Prostate gland (tissue), 2 donors: ENCODE measurements at regions of chrX and their contacts with region 1.

Region 1: GRCh38 chrX:11629593-11630211 is 36.0 kb downstream of the ARHGAP6 start:
- DNase-seq: no peak
- H3K4me3 ChIP-seq: no peak overlapping the region
- H3K27ac ChIP-seq: no peak overlapping the region
- H3K4me1 ChIP-seq: no peaks in the 10 kb centered on the region
- H3K27me3 ChIP-seq: no peaks in the 10 kb centered on the region
- CTCF ChIP-seq: no peak
- POLR2A ChIP-seq: no peak

Region 2: DNA sequence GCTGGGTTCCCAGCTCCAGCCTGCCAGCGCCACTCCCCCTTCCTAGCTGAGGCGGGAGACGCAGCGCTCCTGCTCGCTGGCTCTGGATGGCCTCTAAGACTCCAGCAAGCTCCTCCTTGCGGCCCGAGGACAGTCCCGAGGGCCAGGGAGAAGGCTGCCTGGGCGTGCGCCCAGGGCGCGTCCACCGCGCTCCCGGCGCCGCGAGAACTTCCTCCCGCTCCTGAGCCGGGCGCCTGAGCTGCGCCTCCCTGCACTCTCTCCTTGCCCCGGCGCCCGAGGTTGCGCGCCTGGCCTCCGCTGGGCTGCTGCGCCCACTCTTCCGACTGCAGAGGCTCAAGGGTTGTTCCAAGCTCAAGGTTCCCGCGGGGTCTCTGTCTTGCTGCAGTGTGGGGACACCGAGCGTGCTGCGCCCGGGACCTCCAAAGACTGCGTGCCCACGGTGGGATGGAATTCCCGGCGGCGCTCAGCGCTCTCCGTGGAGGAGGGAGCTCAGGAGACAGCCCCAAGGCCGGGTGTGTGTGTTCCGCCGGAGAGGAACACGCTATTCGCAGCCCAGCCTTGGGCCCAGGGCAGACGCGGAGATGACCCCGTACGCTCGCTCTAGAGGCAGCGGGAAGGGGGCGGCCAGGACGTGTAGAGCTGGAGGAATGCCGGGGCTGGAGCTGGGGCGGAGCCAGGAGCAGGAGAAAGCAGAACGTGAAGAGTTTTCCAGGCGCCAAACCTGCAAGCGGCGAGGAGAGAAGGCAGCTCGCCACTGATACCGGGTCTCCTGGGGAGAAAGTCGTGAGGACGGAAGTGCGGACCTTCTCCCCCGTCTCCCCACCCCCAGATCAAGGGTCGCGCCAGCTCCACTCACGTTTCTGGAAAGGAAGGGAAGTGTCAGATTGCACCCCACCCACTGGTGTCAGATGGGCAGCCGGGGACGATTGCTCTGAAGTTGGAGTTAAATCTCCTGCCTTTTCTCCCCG is 35.7 kb after region 1 on chrX and contains the start of gene ARHGAP6:
- intact Hi-C with region 1: loop called (anchors 5 kb)
- DNase-seq: no peak
- H3K4me3 ChIP-seq: peak within 1 kb of the TSS; percentile 28
- H3K27ac ChIP-seq: peak within 1 kb of the TSS; percentile 15 to 39
- H3K4me1 ChIP-seq: no peaks in the 10 kb centered on the region
- H3K27me3 ChIP-seq: no peaks in the 10 kb centered on the region
- CTCF ChIP-seq: no peak
- POLR2A ChIP-seq: no peak
- total RNA-seq, gene ARHGAP6: 72.6 to 73.7 TPM